Lower leg skin (tissue), 4 donors: ENCODE measurements at regions of chr18 and their contacts with region 1.

Region 1: GRCh38 chr18:32271672-32272208 is 81.9 kb downstream of the MEP1B start:
- DNase-seq: no peak
- H3K4me3 ChIP-seq: no peak overlapping the region
- CTCF ChIP-seq: no peak
- POLR2A ChIP-seq: no peak

Region 2: GRCh38 chr18:30639361-30639760 is 1632.4 kb before region 1 on chr18:
- intact Hi-C with region 1: no loop called
- DNase-seq: no peak
- H3K4me3 ChIP-seq: no peak overlapping the region
- CTCF ChIP-seq: no peak
- POLR2A ChIP-seq: no peak

Region 3: DNA sequence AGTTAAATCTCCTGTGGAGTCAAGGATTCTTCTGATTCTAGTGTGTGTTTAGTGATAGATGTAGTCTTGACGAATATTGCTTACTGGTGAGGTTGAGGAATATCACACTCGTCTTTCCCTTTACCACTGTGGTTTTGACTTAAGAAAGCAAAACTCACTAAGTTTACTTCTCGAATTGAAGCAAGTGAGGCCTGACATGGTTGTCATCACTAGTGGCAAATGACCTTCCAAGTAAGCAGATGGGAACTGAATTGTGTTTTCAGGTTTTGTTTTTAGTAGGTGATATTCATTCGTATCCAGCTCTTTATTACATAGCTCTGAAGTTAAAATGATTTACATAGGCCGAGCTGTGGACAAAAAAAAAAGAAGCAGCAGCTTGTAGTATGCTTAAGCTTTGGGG is 915.7 kb before region 1 on chr18:
- intact Hi-C with region 1: no loop called
- DNase-seq: no peak
- H3K4me3 ChIP-seq: no peak overlapping the region
- CTCF ChIP-seq: no peak
- POLR2A ChIP-seq: no peak

Region 4: GRCh38 chr18:32167975-32168730 is 103.6 kb before region 1 on chr18:
- intact Hi-C with region 1: loop called (anchors 10 kb)
- DNase-seq: no peak
- H3K4me3 ChIP-seq: no peak overlapping the region
- CTCF ChIP-seq: no peak
- POLR2A ChIP-seq: no peak

Region 5: DNA sequence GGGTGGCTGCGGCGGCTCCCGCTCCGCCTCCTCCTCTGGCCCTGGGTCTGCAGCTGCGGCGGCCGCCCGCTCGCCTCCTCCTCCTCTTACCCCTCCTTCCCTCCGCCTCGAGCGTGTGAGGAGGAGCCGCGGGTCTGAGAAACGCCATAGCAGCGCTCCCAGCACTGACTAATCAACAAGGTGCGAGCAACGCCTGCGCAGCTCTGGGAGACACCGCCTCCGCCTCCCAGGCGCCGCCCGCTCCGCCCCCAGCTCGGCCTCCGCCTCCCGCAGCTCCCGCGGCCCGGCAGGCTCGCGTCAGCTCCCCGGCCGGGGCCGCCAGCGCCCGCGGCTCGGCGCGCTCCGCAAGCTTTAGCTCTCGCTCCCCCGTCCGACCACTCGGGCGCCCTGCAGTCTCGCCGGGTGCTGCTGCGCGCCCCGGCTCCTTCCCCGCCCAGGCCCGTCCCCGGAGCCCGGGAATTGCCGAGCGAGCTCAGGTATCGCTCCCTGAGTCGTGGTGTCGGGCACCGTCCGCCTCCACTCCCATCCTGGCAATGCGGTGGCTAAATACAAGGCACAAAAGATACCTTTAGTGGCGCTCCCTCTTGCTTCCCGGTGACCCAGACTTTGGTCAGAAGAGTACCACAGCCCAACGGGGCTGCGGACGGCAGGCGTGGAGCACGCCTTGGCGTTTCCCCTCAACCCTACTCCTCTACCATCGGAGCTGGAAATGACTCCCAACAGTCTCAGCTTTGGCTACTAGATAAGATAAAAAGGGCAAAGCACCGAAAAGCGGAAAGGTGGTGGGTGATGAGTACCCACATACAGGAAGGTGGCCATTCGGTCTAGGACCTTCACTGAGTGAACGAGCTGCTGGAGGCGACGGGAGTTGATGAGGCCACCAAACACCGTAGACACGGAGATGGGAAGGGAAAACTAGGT is 199.2 kb after region 1 on chr18 and contains the start of gene GAREM1:
- intact Hi-C with region 1: loop called (anchors 5 kb)
- DNase-seq: peak; percentile 94 to 98
- H3K4me3 ChIP-seq: peak within 1 kb of the TSS; percentile 53
- CTCF ChIP-seq: no peak
- POLR2A ChIP-seq: no peak
- total RNA-seq, gene GAREM1: 41.1 to 70.9 (median 49.6) TPM

Region 6: GRCh38 chr18:32552421-32553030 is 280.8 kb after region 1 on chr18:
- intact Hi-C with region 1: loop called (anchors 10 kb)
- DNase-seq: peak in 1 of 2 donors; percentile 63
- H3K4me3 ChIP-seq: no peak overlapping the region
- CTCF ChIP-seq: peak in 1 of 3 donors; percentile 48
- POLR2A ChIP-seq: no peak